Left cardiac atrium (tissue), 4 donors: ENCODE measurements at regions of chr5 and their contacts with region 1.

Region 1: GRCh38 chr5:60274747-60275146 is 381.2 kb upstream of the PDE4D start:
- DNase-seq: no peak
- ATAC-seq: no peak

Region 2: GRCh38 chr5:60332244-60333004 is 57.7 kb after region 1 on chr5:
- intact Hi-C with region 1: loop called in 1 of 2 experiments (anchors 10 kb)
- DNase-seq: no peak
- ATAC-seq: no peak

Region 3: GRCh38 chr5:60473654-60474053 is 198.9 kb after region 1 on chr5:
- intact Hi-C with region 1: no loop called
- DNase-seq: no peak
- ATAC-seq: no peak